Esophagus squamous epithelium (tissue), 5 donors: ENCODE measurements at regions of chr12 and their contacts with region 1.

Region 1: DNA sequence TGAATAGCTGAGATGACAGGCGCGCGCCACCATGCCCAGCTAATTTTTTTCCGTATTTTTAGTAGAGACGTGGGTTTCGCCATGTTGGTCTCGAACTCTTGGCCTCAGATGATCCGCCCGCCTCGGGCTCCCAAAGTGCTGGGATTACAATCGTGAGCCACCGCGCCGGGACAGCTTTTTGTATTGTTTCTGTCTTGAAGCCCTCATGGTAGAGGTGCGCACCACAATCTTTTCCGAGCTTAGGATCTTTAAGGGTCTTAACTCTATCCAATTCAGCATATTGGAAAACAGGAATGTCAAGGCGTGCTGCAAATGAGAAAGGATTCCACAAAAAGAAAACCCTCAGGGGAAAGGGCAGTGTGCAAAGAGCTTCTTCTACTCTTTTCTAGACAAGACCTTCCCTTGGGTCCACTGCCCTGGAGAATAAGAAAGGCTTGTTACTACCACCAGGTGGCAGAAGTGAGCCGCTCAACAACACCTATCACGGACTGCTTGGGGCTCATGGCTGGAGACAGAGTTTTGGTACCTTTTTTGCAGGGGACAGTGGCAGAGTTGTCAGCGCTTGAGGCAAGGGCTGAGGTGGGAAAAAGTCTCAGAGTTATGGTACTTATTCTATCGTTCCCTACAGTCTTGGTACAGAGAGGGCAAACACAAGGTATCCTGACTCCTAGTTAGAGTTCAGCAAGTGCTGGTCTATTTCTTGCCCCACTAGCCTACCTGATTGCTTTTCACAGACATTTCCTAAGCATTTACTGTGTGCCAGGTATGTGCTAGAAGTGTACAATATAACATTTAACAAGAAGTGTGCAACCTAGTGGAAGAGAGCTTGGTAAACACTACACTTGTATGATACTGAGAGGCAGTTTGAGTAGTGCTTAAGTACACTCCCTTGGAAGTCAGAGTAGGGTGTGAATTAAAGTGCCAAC is 16.4 kb upstream of the SP7 start:
- DNase-seq: peak; percentile 31
- H3K4me3 ChIP-seq: no peak overlapping the region
- H3K27ac ChIP-seq: peak overlapping the region in 2 of 4 donors; percentile 23 to 38
- H3K4me1 ChIP-seq: peaks cover 0 to 13% (median 5%) of the 10 kb centered on the region in 3 donors
- H3K27me3 ChIP-seq: no peaks in the 10 kb centered on the region
- CTCF ChIP-seq: peak; percentile 69 to 97 (median 93)
- POLR2A ChIP-seq: no peak

Region 2: DNA sequence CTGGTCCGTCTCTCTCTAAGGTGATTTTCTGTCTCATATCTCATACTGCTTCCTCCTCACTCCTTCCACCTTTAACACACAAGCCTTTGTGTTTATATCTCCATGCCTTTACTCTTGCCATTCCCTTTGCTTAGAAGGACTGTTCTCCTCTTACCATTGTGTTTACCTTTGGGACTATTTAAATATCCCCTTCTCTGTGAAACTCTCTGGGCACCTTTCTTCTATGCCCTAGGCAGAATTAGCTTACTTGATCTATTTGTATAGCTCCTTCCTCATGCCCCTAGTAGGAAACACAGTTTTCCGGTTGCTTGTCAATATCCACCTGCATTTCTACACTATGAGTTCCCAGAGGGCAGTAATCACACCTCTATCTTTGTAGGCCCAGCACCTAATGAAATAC is 67.2 kb after region 1 on chr12:
- intact Hi-C with region 1: loop called (anchors 2 kb)
- DNase-seq: no peak
- H3K4me3 ChIP-seq: no peak overlapping the region
- H3K27ac ChIP-seq: no peak overlapping the region
- H3K4me1 ChIP-seq: peaks cover 4 to 24% (median 4%) of the 10 kb centered on the region in 3 donors
- H3K27me3 ChIP-seq: no peaks in the 10 kb centered on the region
- CTCF ChIP-seq: no peak
- POLR2A ChIP-seq: no peak